A673 (cell line): ENCODE measurements at regions of chr17 and their contacts with region 1.

Region 1: GRCh38 chr17:82678265-82678891 is 20.1 kb downstream of the RAB40B start:
- DNase-seq: no peak
- H3K4me3 ChIP-seq: no peak overlapping the region
- H3K27ac ChIP-seq: no peak overlapping the region
- H3K4me1 ChIP-seq: no peaks in the 10 kb centered on the region
- H3K27me3 ChIP-seq: no peaks in the 10 kb centered on the region
- CTCF ChIP-seq: no peak

Region 2: GRCh38 chr17:82698065-82698973 is 19.9 kb after region 1 on chr17 and contains the start of gene RAB40B:
- CTCF ChIA-PET with region 1: no interaction called
- POLR2A ChIA-PET with region 1: interaction called, 13 read pairs
- intact Hi-C with region 1: no loop called
- DNase-seq: peak; percentile 99
- H3K4me3 ChIP-seq: peak within 1 kb of the TSS; percentile 57
- H3K27ac ChIP-seq: no peak within 1 kb of the TSS
- H3K4me1 ChIP-seq: no peaks in the 10 kb centered on the region
- H3K27me3 ChIP-seq: peaks cover 9% of the 10 kb centered on the region
- CTCF ChIP-seq: no peak
- total RNA-seq, gene RAB40B: 3.2 and 4.8 TPM in 2 replicates